ENCODE measurements at regions of chr22 and their contacts with region 1.

Region 1: DNA sequence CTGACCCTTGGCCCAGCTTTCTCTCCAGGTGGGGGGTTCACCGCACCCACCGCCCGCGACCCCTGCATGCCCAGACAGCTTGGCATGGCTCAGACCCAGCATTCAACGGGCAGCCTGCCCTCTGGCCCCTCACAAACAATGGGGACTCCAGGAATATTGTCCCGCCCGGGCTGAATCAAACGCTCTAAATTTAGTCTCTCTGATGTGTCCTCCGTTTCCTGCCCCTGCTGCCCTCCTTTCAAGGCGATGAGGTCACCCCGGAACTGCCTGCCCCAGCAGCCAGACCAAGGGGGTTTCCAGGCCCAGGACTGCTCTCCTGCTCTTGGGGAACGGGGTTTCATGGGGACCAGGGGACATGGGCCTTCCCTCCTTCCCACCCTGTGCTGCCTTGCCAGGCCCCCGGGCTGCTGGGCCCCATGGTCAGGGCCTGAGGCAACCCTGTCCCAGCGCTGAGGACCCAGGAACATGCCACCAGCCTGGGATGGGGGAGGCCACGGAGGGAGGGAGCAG is 10.1 kb upstream of the PDGFB start:
- DNase-seq: no peak
- ATAC-seq: peak; percentile 25; the same call in 1 of the 2 replicates
- H3K4me3 ChIP-seq: no peak overlapping the region
- H3K27ac ChIP-seq: peak overlapping the region; percentile 88
- H3K4me1 ChIP-seq: peaks cover 70% of the 10 kb centered on the region
- H3K27me3 ChIP-seq: no peaks in the 10 kb centered on the region
- CTCF ChIP-seq: no peak

Region 2: DNA sequence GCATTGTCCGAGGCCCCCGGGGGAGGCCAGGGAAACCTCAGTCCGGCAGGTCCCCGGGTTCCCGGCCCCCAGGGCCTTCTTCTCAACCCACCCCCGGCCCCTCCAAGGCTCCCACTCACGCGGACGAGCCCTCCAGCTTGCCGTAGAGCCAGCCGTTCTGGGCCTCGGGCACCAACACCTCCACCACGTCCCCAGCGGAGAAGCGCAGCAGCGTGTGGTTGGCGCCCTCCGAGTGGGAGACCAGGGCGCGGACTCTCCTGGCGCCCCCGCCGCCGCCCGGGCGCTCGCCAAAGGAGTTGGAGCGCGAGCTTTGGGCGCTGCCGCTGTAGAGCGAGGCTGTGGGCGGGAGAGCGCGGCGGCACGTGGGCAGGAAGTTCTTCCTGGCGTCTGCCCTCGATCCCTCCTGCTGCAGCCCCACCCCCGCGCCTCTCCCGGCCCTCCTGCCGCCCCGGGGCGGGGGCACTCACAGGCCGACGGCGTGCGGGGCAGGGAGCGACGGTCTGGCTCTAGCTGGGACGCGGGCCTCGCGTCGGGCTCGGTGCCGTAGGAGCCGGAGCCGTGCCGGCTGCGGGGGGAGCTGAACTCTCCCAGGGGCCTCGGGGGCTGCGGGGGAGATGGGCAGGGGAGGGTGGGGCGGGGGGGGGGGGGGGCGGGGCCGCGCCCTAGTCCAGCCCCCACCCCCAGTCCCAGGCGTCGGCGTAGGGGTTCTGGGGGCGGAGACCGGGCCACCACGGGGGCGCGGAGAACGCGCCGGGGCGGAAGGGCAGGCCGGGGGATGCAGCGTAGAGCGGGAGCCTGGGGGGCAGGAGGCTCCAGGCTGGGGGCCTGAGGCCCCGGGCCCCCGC is 1166.0 kb before region 1 on chr22:
- CTCF ChIA-PET with region 1: no interaction called
- POLR2A ChIA-PET with region 1: no interaction called
- in situ Hi-C with region 1: no loop called
- intact Hi-C with region 1: no loop called
- DNase-seq: no peak
- ATAC-seq: no peak
- H3K4me3 ChIP-seq: no peak overlapping the region
- H3K27ac ChIP-seq: no peak overlapping the region
- H3K4me1 ChIP-seq: no peaks in the 10 kb centered on the region; the same call in 1 of the 2 replicates
- H3K27me3 ChIP-seq: no peaks in the 10 kb centered on the region
- CTCF ChIP-seq: no peak

Region 3: DNA sequence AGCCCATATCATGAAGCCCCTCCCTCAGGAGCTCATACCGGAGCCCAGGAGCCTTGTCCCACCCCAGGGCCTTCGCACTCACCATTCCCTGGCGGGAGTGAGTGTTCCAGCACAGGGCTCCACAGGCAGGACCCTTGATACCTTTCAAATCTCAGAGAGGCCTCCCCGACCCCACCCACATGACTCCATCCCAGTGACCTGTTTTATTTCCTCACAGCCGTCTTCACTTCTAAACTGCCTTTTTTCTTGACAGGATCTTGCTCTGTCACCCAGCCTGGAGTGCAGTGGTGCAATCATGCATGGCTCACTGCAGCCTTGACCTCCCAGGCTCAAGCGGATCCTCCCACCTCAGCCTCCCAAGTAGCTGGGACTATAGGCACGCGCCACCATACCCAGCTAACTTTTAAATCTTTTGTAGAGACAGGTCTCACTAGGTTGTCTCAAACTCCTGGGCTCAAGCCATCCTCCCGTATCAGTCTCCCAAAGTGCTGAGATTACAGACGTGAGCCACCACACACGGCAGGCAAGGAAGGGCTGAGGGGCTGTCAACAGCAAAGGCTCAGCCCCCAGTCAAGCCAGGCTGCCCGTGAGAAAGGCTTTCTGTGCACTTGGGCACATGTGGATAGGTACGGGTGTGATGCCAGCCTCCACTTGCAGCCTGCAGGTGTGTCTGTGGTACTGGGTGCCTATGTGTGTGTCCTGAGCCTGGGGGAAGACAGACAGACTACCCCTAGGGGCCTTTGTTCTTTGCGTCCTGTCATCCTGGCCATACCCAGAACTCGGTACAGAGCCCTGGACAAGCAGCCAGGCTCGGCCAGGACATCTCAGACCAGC is 55.3 kb after region 1 on chr22:
- CTCF ChIA-PET with region 1: interaction called, 5 read pairs
- POLR2A ChIA-PET with region 1: no interaction called
- in situ Hi-C with region 1: no loop called
- intact Hi-C with region 1: loop called (anchors 2 kb)
- DNase-seq: no peak
- ATAC-seq: peak; percentile 17
- H3K4me3 ChIP-seq: no peak overlapping the region
- H3K27ac ChIP-seq: peak overlapping the region; percentile 85
- H3K4me1 ChIP-seq: peaks cover 68% of the 10 kb centered on the region
- H3K27me3 ChIP-seq: no peaks in the 10 kb centered on the region
- CTCF ChIP-seq: no peak

Measured in Panc1 (cell line).